CD4-positive, alpha-beta T cell (primary cell): ENCODE measurements at regions of chr15 and their contacts with region 1.

Region 1: GRCh38 chr15:82809404-82810060 is at the start of gene WHAMM:
- DNase-seq: peak; percentile 88 to 98 (median 93)
- ATAC-seq: peak; percentile 95
- H3K4me3 ChIP-seq: peak within 1 kb of the TSS; percentile 65
- H3K4me3 Mint-ChIP-seq: peak within 1 kb of the TSS; percentile 91
- H3K27ac ChIP-seq: peak within 1 kb of the TSS; percentile 82 to 99
- H3K27ac Mint-ChIP-seq: peak within 1 kb of the TSS; percentile 94
- H3K4me1 ChIP-seq: peaks cover 29% of the 10 kb centered on the region
- H3K4me1 Mint-ChIP-seq: peaks cover 35% of the 10 kb centered on the region
- H3K27me3 ChIP-seq: no peaks in the 10 kb centered on the region
- H3K27me3 Mint-ChIP-seq: no peaks in the 10 kb centered on the region
- CTCF ChIP-seq: no peak
- total RNA-seq, gene WHAMM: 86.4 to 87.7 TPM

Region 2: GRCh38 chr15:82680200-82681102 is 129.1 kb before region 1 on chr15:
- CTCF ChIA-PET with region 1: no interaction called
- POLR2A ChIA-PET with region 1: interaction called, 28 read pairs
- intact Hi-C with region 1: loop called (anchors 2 kb)
- DNase-seq: peak; percentile 74 to 94 (median 82)
- ATAC-seq: peak; percentile 98
- H3K4me3 ChIP-seq: peak overlapping the region; percentile 91
- H3K4me3 Mint-ChIP-seq: peak overlapping the region; percentile 94
- H3K27ac ChIP-seq: peak overlapping the region; percentile 70 to 74
- H3K27ac Mint-ChIP-seq: peak overlapping the region; percentile 95
- H3K4me1 ChIP-seq: peaks cover 19% of the 10 kb centered on the region
- H3K4me1 Mint-ChIP-seq: peaks cover 15% of the 10 kb centered on the region
- H3K27me3 ChIP-seq: no peaks in the 10 kb centered on the region
- H3K27me3 Mint-ChIP-seq: no peaks in the 10 kb centered on the region
- CTCF ChIP-seq: peak; percentile 35

Region 3: DNA sequence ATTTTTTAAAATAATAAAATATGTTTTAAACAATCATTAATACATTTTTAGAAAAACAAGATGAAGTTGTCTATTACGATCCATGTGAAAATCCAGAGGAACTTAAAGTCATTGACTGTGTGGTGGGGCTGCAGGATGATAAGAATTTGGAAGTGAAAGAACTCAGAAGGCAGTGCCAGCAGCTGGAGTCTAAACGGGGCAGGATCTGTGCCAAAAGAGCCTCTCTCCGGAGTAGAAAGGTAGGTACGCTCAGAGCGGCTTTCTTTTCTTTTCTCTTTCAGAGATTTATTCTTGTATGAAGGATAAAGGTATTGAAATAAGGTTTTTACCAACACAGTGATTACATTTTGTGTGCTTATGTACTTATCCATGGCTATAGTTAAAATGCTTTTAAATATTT is 13.5 kb after region 1 on chr15:
- CTCF ChIA-PET with region 1: interaction called, 3 read pairs
- POLR2A ChIA-PET with region 1: interaction called, 19 read pairs
- intact Hi-C with region 1: no loop called
- DNase-seq: no peak
- ATAC-seq: no peak
- H3K4me3 ChIP-seq: no peak overlapping the region
- H3K4me3 Mint-ChIP-seq: no peak overlapping the region
- H3K27ac ChIP-seq: no peak overlapping the region
- H3K27ac Mint-ChIP-seq: no peak overlapping the region
- H3K4me1 ChIP-seq: no peaks in the 10 kb centered on the region
- H3K4me1 Mint-ChIP-seq: peaks cover 9% of the 10 kb centered on the region
- H3K27me3 ChIP-seq: no peaks in the 10 kb centered on the region
- H3K27me3 Mint-ChIP-seq: no peaks in the 10 kb centered on the region
- CTCF ChIP-seq: no peak

Region 4: DNA sequence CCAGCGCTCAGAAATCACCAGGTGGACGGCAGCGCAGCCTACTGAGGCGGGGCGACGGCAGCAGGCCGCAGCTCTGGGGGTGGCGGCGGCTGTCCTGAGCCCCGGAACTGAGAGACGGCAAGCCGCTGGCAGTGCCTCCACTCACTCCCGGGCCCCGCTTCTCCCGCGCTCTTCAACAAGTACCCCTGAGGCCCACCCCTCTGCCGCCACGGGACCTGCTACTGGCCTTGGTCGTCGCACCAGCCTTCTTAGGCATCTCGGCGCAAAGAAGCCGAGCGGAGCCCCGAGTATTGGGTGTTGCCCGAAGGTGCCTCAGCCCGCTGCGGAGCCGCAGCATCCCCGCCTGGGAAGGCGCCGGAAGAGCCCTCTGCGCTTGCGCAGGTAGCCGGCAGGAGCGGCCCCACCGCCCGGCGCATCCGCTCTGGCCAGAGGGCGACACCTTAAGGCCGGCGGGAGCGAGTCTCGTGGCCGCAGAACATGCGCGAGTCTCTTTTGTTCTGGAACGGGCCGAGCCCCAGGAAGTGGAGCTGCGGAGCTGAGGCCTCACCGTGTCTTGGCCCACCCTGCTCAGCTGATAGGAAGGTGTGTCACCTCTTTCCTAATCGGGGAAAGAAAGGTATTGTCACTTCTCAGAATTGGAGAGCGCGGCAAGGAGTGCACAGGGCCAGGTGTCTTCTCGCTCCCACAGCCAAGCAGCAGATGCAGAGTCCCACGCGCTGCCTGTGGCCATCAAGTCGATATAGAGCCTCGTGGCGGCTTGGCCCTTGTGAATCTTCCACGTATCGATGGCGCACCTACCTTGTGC is 201.9 kb after region 1 on chr15 and contains the start of gene C15orf40:
- CTCF ChIA-PET with region 1: interaction called, 4 read pairs
- POLR2A ChIA-PET with region 1: interaction called, 14 read pairs
- intact Hi-C with region 1: loop called in 1 of 2 experiments (anchors 1 kb)
- DNase-seq: peak; percentile 68 to 94 (median 82)
- ATAC-seq: peak; percentile 81
- H3K4me3 ChIP-seq: peak within 1 kb of the TSS; percentile 82
- H3K4me3 Mint-ChIP-seq: peak within 1 kb of the TSS; percentile 100
- H3K27ac ChIP-seq: peak within 1 kb of the TSS; percentile 70 to 84
- H3K27ac Mint-ChIP-seq: peak within 1 kb of the TSS; percentile 88
- H3K4me1 ChIP-seq: peaks cover 24% of the 10 kb centered on the region
- H3K4me1 Mint-ChIP-seq: peaks cover 56% of the 10 kb centered on the region
- H3K27me3 ChIP-seq: no peaks in the 10 kb centered on the region
- H3K27me3 Mint-ChIP-seq: no peaks in the 10 kb centered on the region
- CTCF ChIP-seq: no peak
- total RNA-seq, gene C15orf40: 7.4 to 11.0 TPM

Region 5: DNA sequence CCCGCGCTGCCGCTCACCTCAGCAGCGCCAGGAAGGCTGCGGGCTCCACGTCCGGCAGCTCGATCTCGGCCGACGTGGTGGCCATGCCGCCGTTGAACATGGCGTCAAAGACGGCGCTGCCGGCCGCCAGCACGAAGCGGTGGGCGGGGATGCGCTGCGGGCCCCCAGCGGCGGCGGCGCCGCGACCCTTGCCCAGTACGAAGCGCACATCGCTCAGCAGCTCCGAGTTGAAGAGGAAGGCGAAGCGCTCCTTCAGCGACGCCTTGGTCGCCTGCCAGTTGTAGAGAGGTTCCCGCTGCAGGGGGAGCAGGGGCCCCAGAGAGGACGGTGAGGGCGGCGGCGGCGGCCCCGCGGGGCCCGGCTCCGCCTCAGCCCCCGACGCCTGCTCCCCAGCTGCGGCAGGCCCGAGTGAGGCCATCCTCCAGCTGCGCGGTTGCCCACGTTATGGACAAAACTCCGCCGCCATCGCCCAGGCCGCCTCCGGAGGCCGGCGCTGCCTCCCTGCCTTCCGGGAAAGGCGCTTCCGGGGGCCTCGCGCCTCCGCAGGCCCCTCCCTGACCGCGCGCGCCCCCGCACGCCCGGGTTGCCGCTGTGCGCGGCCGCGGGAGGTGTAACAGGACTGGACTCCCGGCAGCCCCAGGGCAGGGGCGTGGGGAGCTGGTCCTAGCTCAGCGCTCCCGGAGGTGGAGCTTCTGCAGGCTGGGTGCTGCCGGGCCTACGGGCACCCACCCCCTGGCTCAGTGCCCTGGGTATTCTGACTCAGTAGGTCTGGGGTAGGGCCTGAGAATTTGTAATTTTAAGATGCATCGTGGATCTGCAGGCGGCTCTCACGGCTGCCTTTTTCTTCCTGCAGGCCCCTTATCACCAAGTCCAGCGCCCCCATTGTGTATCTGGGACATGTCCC is 257.5 kb after region 1 on chr15 and contains the start of gene BTBD1:
- CTCF ChIA-PET with region 1: no interaction called
- POLR2A ChIA-PET with region 1: interaction called, 7 read pairs
- intact Hi-C with region 1: loop called in 1 of 2 experiments (anchors 5 kb)
- DNase-seq: peak; percentile 53 to 90 (median 74)
- ATAC-seq: peak; percentile 73
- H3K4me3 ChIP-seq: peak within 1 kb of the TSS; percentile 82
- H3K4me3 Mint-ChIP-seq: peak within 1 kb of the TSS; percentile 88
- H3K27ac ChIP-seq: peak within 1 kb of the TSS; percentile 57 to 74
- H3K27ac Mint-ChIP-seq: peak within 1 kb of the TSS; percentile 81
- H3K4me1 ChIP-seq: peaks cover 22% of the 10 kb centered on the region
- H3K4me1 Mint-ChIP-seq: peaks cover 9% of the 10 kb centered on the region
- H3K27me3 ChIP-seq: no peaks in the 10 kb centered on the region
- H3K27me3 Mint-ChIP-seq: no peaks in the 10 kb centered on the region
- CTCF ChIP-seq: no peak
- total RNA-seq, gene BTBD1: 26.3 to 27.5 TPM